ENCODE measurements at regions of chr1 and their contacts with region 1.

Region 1: GRCh38 chr1:10217748-10218441 is 7.5 kb downstream of the KIF1B start:
- DNase-seq: no peak
- ATAC-seq: peak in 3 of 4 donors; percentile 23 to 38 (median 38)
- H3K4me3 ChIP-seq: no peak overlapping the region
- H3K27ac ChIP-seq: peak overlapping the region in 7 of 12 donors; percentile 1 to 61 (median 29)
- H3K4me1 ChIP-seq: peaks cover 10 to 90% (median 76%) of the 10 kb centered on the region in 12 donors
- H3K27me3 ChIP-seq: no peaks in the 10 kb centered on the region
- CTCF ChIP-seq: no peak
- POLR2A ChIP-seq: no peak

Region 2: GRCh38 chr1:10161541-10162290 is 56.2 kb before region 1 on chr1:
- intact Hi-C with region 1: no loop called
- DNase-seq: peak in 4 of 5 donors; percentile 44 to 79 (median 65)
- ATAC-seq: peak; percentile 85 to 93 (median 92)
- H3K4me3 ChIP-seq: no peak overlapping the region
- H3K27ac ChIP-seq: peak overlapping the region in 11 of 12 donors; percentile 38 to 85 (median 72)
- H3K4me1 ChIP-seq: peaks cover 0 to 17% (median 3%) of the 10 kb centered on the region in 12 donors
- H3K27me3 ChIP-seq: no peaks in the 10 kb centered on the region
- CTCF ChIP-seq: no peak
- POLR2A ChIP-seq: no peak

Region 3: GRCh38 chr1:10253755-10254154 is 35.9 kb after region 1 on chr1:
- intact Hi-C with region 1: loop called in 6 of 10 experiments (anchors 5 kb)
- DNase-seq: no peak
- ATAC-seq: peak; percentile 93 to 95 (median 94)
- H3K4me3 ChIP-seq: no peak overlapping the region
- H3K27ac ChIP-seq: peak overlapping the region; percentile 8 to 67 (median 56)
- H3K4me1 ChIP-seq: peaks cover 7 to 66% (median 35%) of the 10 kb centered on the region in 12 donors
- H3K27me3 ChIP-seq: no peaks in the 10 kb centered on the region
- CTCF ChIP-seq: no peak
- POLR2A ChIP-seq: no peak